ENCODE measurements at regions of chrX and their contacts with region 1.

Region 1: DNA sequence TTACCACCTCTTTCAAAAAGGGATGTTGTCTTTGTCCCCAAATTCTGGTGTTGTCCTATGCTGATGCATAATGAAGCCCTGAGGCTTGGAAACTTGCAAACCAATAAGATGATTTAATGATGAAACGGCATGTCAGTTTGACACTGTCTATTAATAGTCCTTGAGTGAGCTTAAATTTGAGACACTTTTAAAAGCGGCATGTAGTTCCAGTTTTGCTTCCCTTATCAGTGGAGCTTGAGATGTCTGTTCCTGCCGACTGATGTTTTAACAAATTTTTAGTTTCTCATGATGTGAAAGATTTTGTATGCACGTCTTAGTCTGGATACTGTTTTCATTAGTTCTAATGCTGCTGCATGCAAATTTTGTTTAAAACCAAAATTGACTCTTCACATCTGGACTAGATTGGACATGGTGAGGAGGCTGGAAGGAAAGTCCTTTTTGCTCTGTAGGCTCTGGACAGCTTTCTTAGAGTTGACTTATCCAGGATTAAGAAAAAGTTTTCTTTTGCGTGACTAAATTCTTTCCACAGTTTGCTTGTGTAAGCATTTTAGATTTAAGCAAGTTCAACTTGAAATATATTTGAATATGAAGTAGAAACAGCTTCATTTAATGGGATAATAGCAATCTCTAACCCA is 11.7 kb downstream of the C1GALT1C1 start:
- DNase-seq: no peak
- ATAC-seq: peak; percentile 71
- H3K4me3 ChIP-seq: no peak overlapping the region
- H3K27ac ChIP-seq: peak overlapping the region; percentile 6; the same call in 1 of the 2 replicates
- H3K4me1 ChIP-seq: peaks cover 4% of the 10 kb centered on the region
- H3K27me3 ChIP-seq: no peaks in the 10 kb centered on the region
- CTCF ChIP-seq: no peak
- EP300 ChIP-seq: no peak
- POLR2A ChIP-seq: no peak
- RAD21 ChIP-seq: no peak

Region 2: GRCh38 chrX:120629667-120630537 is 11.8 kb after region 1 on chrX and contains the start of gene C1GALT1C1:
- CTCF ChIA-PET with region 1: interaction called, 8 read pairs
- POLR2A ChIA-PET with region 1: interaction called, 6 read pairs
- RAD21 ChIA-PET with region 1: interaction called, 9 read pairs
- SMC1A ChIA-PET with region 1: interaction called, 12 read pairs
- in situ Hi-C with region 1: no loop called
- intact Hi-C with region 1: no loop called
- DNase-seq: peak; percentile 77
- ATAC-seq: peak; percentile 97
- H3K4me3 ChIP-seq: peak within 1 kb of the TSS; percentile 74
- H3K27ac ChIP-seq: peak within 1 kb of the TSS; percentile 85
- H3K4me1 ChIP-seq: no peaks in the 10 kb centered on the region; the same call in 1 of the 2 replicates
- H3K27me3 ChIP-seq: no peaks in the 10 kb centered on the region
- CTCF ChIP-seq: no peak
- EP300 ChIP-seq: no peak
- POLR2A ChIP-seq: peak; percentile 86
- RAD21 ChIP-seq: no peak
- polyA plus RNA-seq, gene C1GALT1C1: 51.7 to 71.7 TPM